ENCODE measurements at regions of chr19 and their contacts with region 1.

Region 1: GRCh38 chr19:4457654-4458395 is at the start of gene UBXN6:
- DNase-seq: peak; percentile 99
- H3K4me3 ChIP-seq: peak within 1 kb of the TSS; percentile 51 to 82 (median 76)
- H3K27ac ChIP-seq: peak within 1 kb of the TSS; percentile 88 to 95 (median 94)
- H3K4me1 ChIP-seq: peaks cover 0 to 26% (median 25%) of the 10 kb centered on the region in 4 donors
- H3K27me3 ChIP-seq: no peaks in the 10 kb centered on the region
- CTCF ChIP-seq: no peak
- EP300 ChIP-seq: no peak
- POLR2A ChIP-seq: no peak
- total RNA-seq, gene UBXN6: 47.1 to 103 (median 62.7) TPM

Region 2: GRCh38 chr19:4405977-4406376 is 51.8 kb before region 1 on chr19:
- intact Hi-C with region 1: loop called (anchors 2 kb)
- DNase-seq: no peak
- H3K4me3 ChIP-seq: no peak overlapping the region
- H3K27ac ChIP-seq: no peak overlapping the region
- H3K4me1 ChIP-seq: peaks cover 0 to 21% (median 20%) of the 10 kb centered on the region in 4 donors
- H3K27me3 ChIP-seq: no peaks in the 10 kb centered on the region
- CTCF ChIP-seq: no peak
- EP300 ChIP-seq: no peak
- POLR2A ChIP-seq: no peak

Region 3: GRCh38 chr19:4518345-4519171 is 60.7 kb after region 1 on chr19 and contains the start of gene PLIN4:
- intact Hi-C with region 1: loop called (anchors 5 kb)
- DNase-seq: peak; percentile 97
- H3K4me3 ChIP-seq: peak within 1 kb of the TSS; percentile 53 to 73 (median 60)
- H3K27ac ChIP-seq: peak within 1 kb of the TSS; percentile 91 to 98 (median 94)
- H3K4me1 ChIP-seq: peaks cover 0 to 56% (median 37%) of the 10 kb centered on the region in 4 donors
- H3K27me3 ChIP-seq: no peaks in the 10 kb centered on the region
- CTCF ChIP-seq: no peak
- EP300 ChIP-seq: peak in 2 of 4 donors; percentile 48 to 81
- POLR2A ChIP-seq: peak; percentile 91 to 97
- total RNA-seq, gene PLIN4: 41.3 to 71.7 (median 55.9) TPM

Region 4: DNA sequence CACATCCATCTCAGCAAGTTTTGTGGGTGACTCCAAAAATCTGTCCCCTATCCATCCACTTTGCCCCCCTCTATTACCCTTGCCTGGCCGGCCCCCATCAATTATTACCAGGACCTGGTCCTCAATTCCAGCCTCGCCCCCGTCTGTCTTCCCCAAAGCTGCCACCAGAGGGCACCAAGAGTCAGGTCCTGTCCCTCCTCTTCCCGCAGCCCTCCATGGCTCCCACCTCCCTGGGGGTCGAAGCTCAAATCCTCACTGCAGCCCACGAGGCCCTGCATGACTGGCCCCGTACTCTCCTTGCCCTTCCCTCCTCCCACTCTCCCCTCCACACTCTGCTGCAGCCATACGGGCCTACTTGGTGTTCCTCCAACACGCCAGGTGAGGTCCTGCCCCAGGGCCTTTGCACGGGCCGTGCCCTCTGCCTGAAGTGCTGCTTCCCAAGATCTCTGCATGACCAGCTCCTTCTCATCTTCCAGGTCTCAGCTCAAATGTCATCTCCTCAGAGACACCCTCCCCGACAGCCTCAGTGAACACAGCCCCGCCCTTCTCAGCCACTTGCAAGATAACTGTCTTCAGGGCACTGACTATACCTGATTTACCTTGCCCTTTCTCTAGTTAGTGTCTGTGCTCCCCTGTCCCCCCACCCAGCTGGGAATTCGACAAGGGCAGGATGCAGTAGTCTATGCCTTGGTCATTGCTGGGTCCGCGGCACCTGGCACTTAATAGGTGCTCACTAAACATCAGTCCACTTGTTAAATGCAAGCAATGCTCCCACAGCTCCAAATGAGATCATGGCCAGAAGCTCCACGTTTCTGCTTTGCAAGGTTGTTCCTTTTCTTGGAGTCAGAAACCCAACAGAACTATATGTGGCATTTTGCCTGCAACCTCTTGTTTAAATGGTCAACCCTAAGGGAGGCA is 118.5 kb after region 1 on chr19:
- intact Hi-C with region 1: no loop called
- DNase-seq: peak; percentile 76
- H3K4me3 ChIP-seq: no peak overlapping the region
- H3K27ac ChIP-seq: peak overlapping the region; percentile 17 to 68 (median 32)
- H3K4me1 ChIP-seq: peaks cover 0 to 11% (median 11%) of the 10 kb centered on the region in 4 donors
- H3K27me3 ChIP-seq: peaks cover 14 to 76% (median 63%) of the 10 kb centered on the region in 3 donors
- CTCF ChIP-seq: peak; percentile 48 to 66 (median 50)
- EP300 ChIP-seq: no peak
- POLR2A ChIP-seq: no peak

Measured in sigmoid colon (tissue), 7 donors.